ENCODE measurements at regions of chr5 and their contacts with region 1.

Region 1: DNA sequence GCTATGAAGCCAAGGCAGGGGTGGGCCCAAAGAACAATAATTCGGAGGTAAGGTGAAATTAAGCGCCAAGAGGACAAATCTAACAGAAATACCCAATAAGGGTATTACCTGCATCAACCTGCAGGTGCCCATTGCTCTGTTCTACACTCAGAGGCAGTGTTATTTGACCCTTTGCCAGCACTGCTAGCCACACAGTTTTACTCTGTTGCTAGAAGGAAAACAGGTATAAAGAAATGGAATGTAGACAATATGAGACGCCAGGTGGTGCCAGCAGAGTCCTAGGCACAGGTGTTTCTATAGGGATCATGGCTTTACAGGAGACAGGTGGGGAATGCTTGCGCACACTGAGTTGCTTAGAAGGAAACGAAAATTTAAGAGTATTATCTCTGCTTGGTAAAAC is 201.3 kb downstream of the HTR1A start:
- DNase-seq: no peak
- H3K4me3 Mint-ChIP-seq: no peak overlapping the region
- H3K27ac Mint-ChIP-seq: no peak overlapping the region
- H3K4me1 Mint-ChIP-seq: no peaks in the 10 kb centered on the region
- H3K27me3 Mint-ChIP-seq: no peaks in the 10 kb centered on the region

Region 2: DNA sequence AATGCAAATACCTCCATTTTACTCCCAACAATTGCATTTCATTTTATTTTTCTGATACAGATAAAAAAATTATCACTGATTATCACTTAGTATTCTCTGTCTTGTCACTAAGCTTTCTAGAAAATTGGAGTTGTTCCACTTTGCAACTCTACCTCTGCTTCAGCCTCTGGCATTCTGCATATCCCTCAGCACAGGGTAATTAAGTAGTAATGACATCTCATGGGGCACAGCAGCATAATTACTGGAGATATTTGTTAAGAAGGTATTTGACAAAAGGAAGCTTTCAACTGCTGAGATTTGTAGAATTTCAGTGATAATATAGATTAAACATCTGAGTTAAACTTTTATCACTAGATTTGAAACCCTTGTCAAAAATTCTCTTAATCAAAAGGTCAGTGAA is 245.0 kb before region 1 on chr5:
- intact Hi-C with region 1: no loop called
- DNase-seq: no peak
- H3K4me3 Mint-ChIP-seq: no peak overlapping the region
- H3K27ac Mint-ChIP-seq: no peak overlapping the region
- H3K4me1 Mint-ChIP-seq: no peaks in the 10 kb centered on the region
- H3K27me3 Mint-ChIP-seq: no peaks in the 10 kb centered on the region

Region 3: DNA sequence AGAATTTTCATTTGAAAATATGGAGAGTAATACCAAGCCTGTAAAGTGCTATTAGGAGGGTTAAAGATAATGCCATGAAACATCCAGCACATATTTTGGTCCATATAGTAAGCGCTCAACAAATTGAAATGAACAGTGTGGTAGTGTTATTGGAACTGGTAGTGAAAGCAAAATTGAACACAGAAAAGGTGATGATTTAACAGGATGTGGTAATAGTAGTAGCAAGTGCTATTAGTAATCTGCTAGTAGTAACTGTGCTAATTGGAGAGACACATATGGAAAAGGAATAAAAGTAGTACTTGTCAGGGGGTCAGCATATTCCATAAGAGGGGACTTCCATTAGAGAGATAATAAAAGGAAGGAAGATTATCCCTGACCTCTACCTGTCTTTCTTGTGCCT is 14.0 kb after region 1 on chr5:
- intact Hi-C with region 1: no loop called
- DNase-seq: no peak
- H3K4me3 Mint-ChIP-seq: no peak overlapping the region
- H3K27ac Mint-ChIP-seq: no peak overlapping the region
- H3K4me1 Mint-ChIP-seq: no peaks in the 10 kb centered on the region
- H3K27me3 Mint-ChIP-seq: no peaks in the 10 kb centered on the region

Region 4: GRCh38 chr5:63794296-63794695 is 33.3 kb after region 1 on chr5:
- intact Hi-C with region 1: loop called (anchors 1 kb)
- DNase-seq: no peak
- H3K4me3 Mint-ChIP-seq: no peak overlapping the region
- H3K27ac Mint-ChIP-seq: no peak overlapping the region
- H3K4me1 Mint-ChIP-seq: no peaks in the 10 kb centered on the region
- H3K27me3 Mint-ChIP-seq: no peaks in the 10 kb centered on the region

Measured in activated CD4-positive, alpha-beta T cell treated with anti-CD3 and anti-CD28 coated beads, Interleukin-2, amount 10 ng/mL, durations not matched to agents 24 days and 14 days (primary cell).